ENCODE measurements at regions of chr10 and their contacts with region 1.

Region 1: GRCh38 chr10:125048101-125048864 is 106.4 kb downstream of the ZRANB1 start:
- DNase-seq: peak; percentile 91
- H3K27ac ChIP-seq: peak overlapping the region; percentile 63
- CTCF ChIP-seq: peak; percentile 79

Region 2: DNA sequence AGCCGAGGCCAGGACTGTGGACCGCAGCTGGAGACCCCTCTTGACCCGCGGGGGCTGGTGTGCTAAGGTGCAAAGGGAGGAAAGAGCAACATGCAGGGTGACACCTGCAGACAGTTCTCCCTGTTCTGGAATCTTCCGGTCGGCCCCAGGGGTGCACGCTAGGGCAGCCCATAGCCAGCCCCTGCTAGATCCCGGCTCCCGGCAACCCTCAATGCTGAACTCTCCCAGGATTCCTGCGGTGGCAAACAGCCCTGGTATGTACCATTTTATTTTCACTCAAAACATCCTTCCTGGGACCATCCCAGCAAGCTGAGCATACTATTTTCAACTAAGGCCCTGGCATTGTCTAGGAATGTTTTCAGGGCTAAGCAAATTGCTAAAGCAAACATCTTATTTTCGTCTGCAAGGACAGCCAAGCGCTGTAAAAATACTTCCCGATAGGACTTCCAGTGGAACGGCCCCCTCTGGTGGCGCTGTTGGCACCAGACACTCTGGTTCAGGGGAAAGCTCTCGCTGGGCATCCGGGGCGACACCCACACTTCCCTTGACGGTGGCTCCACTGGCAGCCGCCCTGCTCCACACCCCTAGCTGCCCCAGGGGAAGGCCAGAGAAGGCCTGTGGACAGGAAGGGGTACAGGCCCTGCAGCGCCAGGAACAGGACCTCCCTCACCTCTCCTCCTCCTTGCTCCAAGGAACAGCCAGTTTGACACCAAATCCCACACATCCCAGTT is 12.7 kb after region 1 on chr10:
- CTCF ChIA-PET with region 1: interaction called, 21 read pairs
- POLR2A ChIA-PET with region 1: no interaction called
- DNase-seq: peak; percentile 72
- H3K27ac ChIP-seq: peak overlapping the region; percentile 75
- CTCF ChIP-seq: peak; percentile 83

Region 3: DNA sequence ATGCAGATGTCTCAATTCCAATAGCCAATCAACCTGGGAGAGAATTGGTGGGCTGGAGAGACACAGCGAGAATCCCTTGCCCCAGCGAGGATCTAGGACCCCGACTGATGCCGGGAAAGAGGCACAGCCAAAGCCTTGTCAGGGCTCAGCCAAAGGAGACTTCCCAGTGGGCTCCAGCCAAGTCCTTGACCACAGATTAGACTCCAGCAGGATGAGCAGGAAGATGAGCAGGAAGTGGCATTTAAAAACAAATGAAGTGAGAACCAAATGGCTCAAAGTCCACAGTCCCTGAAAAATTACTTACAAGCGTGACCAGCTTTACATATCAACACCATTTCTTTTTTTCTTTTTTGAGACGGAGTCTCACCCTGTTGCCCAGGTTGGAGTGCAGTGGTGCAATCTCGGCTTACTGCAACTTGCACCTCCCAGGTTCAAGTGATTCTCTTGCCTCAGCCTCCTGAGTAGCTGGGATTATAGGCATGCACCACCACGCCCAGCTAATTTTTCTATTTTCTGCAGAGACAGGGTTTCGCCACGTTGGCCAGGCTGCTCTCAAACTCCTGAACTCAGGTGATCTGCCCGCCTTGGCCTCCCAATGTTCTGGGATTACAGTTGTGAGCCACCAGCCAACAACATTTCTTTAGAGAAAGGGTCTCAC is 71.9 kb after region 1 on chr10:
- CTCF ChIA-PET with region 1: interaction called, 11 read pairs
- POLR2A ChIA-PET with region 1: no interaction called
- DNase-seq: no peak
- H3K27ac ChIP-seq: peak overlapping the region; percentile 69
- CTCF ChIP-seq: no peak

Measured in RWPE1 (cell line).